B cell (primary cell): ENCODE measurements at regions of chr15 and their contacts with region 1.

Region 1: DNA sequence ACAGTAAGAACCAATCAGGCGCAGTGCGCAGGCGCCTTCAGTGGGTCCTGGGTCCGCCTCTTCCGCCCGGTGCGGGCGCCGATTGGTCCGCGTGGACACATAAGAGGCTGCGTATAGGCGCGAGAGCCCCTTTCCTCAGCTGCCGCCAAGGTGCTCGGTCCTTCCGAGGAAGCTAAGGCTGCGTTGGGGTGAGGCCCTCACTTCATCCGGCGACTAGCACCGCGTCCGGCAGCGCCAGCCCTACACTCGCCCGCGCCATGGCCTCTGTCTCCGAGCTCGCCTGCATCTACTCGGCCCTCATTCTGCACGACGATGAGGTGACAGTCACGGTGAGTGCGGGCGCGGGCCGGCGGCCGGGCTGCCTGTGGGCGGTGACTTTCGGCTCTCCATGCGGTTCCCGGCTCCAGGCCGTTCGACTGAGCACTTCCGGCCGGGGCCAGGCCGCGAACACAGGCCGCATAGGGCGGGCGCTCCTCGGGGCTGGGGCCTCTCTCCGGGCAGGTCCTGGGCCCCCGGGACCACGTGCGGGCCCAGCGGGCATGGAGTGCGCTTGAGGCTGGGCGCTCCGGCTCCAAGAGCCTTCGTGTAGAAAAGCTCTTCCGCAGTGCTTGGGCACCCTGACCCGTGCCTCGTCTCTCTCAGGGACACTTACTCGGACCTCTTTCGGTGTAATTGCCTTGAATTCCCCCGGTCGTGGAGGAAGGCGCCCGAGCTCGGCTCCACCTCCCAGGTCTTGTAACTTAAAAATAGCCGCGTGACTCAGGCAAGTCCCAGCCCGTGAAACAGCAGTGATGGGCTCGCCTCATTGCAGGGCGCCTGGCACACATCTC is at the start of gene RPLP1:
- DNase-seq: peak; percentile 97
- ATAC-seq: peak; percentile 91
- H3K4me3 ChIP-seq: peak within 1 kb of the TSS; percentile 77 to 97 (median 88)
- H3K4me3 Mint-ChIP-seq: peak within 1 kb of the TSS; percentile 100
- H3K27ac ChIP-seq: peak within 1 kb of the TSS; percentile 77 to 93
- H3K27ac Mint-ChIP-seq: peak within 1 kb of the TSS; percentile 100
- H3K4me1 ChIP-seq: peaks cover 26% of the 10 kb centered on the region in 2 donors
- H3K4me1 Mint-ChIP-seq: peaks cover 43% of the 10 kb centered on the region
- H3K27me3 ChIP-seq: no peaks in the 10 kb centered on the region
- H3K27me3 Mint-ChIP-seq: no peaks in the 10 kb centered on the region
- CTCF ChIP-seq: no peak
- total RNA-seq, gene RPLP1: 2,373 and 2,400 TPM in 2 replicates

Region 2: GRCh38 chr15:68078365-68078764 is 1374.5 kb before region 1 on chr15:
- CTCF ChIA-PET with region 1: no interaction called
- POLR2A ChIA-PET with region 1: interaction called, 10 read pairs
- intact Hi-C with region 1: no loop called
- DNase-seq: no peak
- ATAC-seq: no peak
- H3K4me3 ChIP-seq: no peak overlapping the region
- H3K4me3 Mint-ChIP-seq: no peak overlapping the region
- H3K27ac ChIP-seq: no peak overlapping the region
- H3K27ac Mint-ChIP-seq: no peak overlapping the region
- H3K4me1 ChIP-seq: peaks cover 12 to 41% of the 10 kb centered on the region in 2 donors
- H3K4me1 Mint-ChIP-seq: peaks cover 69% of the 10 kb centered on the region
- H3K27me3 ChIP-seq: no peaks in the 10 kb centered on the region
- H3K27me3 Mint-ChIP-seq: no peaks in the 10 kb centered on the region
- CTCF ChIP-seq: no peak

Region 3: GRCh38 chr15:69280783-69281182 is 172.1 kb before region 1 on chr15:
- CTCF ChIA-PET with region 1: no interaction called
- POLR2A ChIA-PET with region 1: no interaction called
- intact Hi-C with region 1: no loop called
- DNase-seq: no peak
- ATAC-seq: no peak
- H3K4me3 ChIP-seq: no peak overlapping the region
- H3K4me3 Mint-ChIP-seq: no peak overlapping the region
- H3K27ac ChIP-seq: no peak overlapping the region
- H3K27ac Mint-ChIP-seq: no peak overlapping the region
- H3K4me1 ChIP-seq: no peaks in the 10 kb centered on the region
- H3K4me1 Mint-ChIP-seq: no peaks in the 10 kb centered on the region
- H3K27me3 ChIP-seq: no peaks in the 10 kb centered on the region
- H3K27me3 Mint-ChIP-seq: peaks cover 17% of the 10 kb centered on the region
- CTCF ChIP-seq: no peak

Region 4: DNA sequence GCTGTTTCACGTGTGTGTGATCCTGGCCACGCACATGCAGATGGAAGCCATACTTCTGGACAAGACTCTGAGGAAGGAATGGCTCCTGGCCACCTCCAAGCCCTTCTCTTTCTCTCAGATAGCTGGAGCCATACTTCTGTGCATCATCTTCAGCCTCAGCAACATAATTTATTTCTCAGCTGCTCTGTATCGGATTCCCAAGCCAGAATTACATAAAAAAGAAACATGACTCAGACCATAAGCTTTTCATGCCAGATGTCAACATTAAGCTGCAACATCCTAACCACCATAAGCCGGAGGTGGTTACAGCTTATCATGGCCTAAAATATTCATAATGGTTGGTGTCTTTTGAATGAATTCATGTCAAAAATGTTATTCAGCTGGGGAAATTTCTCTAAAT is 49.3 kb before region 1 on chr15:
- CTCF ChIA-PET with region 1: no interaction called
- POLR2A ChIA-PET with region 1: no interaction called
- intact Hi-C with region 1: no loop called
- DNase-seq: no peak
- ATAC-seq: no peak
- H3K4me3 ChIP-seq: no peak overlapping the region
- H3K4me3 Mint-ChIP-seq: no peak overlapping the region
- H3K27ac ChIP-seq: no peak overlapping the region
- H3K27ac Mint-ChIP-seq: no peak overlapping the region
- H3K4me1 ChIP-seq: no peaks in the 10 kb centered on the region
- H3K4me1 Mint-ChIP-seq: no peaks in the 10 kb centered on the region
- H3K27me3 ChIP-seq: peaks cover 0 to 2% (median 0%) of the 10 kb centered on the region in 4 experiments
- H3K27me3 Mint-ChIP-seq: peaks cover 18% of the 10 kb centered on the region
- CTCF ChIP-seq: no peak

Region 5: DNA sequence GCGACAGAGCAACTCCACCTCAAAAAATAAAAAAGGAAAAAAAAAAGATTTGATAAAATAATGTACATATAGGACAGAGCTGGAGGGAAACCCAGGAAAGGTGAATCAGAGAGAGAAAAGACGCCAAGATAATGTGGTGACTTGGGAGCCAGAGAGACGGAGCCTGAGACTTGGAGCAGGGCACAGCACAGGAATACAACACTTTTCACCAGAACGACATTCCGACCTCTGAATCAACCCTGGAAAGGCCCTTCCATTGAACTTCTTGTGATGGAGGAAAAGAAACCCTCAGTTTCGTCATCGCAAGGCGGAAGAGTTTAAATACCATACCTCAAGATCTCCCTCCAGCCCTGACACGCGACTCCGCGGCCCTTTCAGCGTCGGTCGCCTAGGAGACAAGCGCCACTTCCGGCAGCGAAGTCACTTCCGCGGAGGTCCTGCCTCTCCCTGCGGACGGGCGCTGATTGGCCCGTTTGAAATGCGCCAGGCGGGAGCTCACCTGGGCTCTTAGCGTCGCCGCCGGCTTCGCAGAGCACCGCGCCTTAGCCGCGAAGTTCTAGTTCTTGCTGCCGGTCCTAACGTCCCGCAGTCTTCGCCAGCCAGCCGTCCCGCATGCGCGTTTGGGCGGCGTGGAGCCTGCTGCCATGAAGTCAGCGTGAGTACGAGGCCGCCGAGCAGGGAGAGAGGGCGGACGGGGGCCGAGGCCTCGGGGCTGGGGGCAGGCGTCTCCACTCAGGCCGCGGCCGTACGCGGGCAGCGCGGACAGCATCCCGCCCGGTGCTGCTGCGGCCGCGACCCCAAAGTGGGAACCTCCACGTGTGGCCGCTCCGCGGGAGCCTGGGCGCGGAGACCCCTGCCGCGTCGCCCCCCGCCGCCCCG is 38.8 kb before region 1 on chr15 and contains the start of gene KIF23:
- CTCF ChIA-PET with region 1: interaction called, 5 read pairs
- POLR2A ChIA-PET with region 1: interaction called, 12 read pairs
- intact Hi-C with region 1: loop called (anchors 1 kb)
- DNase-seq: peak; percentile 94
- ATAC-seq: peak; percentile 96
- H3K4me3 ChIP-seq: peak within 1 kb of the TSS; percentile 58 to 80 (median 70)
- H3K4me3 Mint-ChIP-seq: peak within 1 kb of the TSS; percentile 93
- H3K27ac ChIP-seq: no peak within 1 kb of the TSS
- H3K27ac Mint-ChIP-seq: peak within 1 kb of the TSS; percentile 62
- H3K4me1 ChIP-seq: peaks cover 5 to 9% of the 10 kb centered on the region in 2 donors
- H3K4me1 Mint-ChIP-seq: peaks cover 13% of the 10 kb centered on the region
- H3K27me3 ChIP-seq: peaks cover 0 to 8% (median 2%) of the 10 kb centered on the region in 4 experiments
- H3K27me3 Mint-ChIP-seq: peaks cover 16% of the 10 kb centered on the region
- CTCF ChIP-seq: no peak
- total RNA-seq, gene KIF23: 0.30 and 0.41 TPM in 2 replicates

Region 6: DNA sequence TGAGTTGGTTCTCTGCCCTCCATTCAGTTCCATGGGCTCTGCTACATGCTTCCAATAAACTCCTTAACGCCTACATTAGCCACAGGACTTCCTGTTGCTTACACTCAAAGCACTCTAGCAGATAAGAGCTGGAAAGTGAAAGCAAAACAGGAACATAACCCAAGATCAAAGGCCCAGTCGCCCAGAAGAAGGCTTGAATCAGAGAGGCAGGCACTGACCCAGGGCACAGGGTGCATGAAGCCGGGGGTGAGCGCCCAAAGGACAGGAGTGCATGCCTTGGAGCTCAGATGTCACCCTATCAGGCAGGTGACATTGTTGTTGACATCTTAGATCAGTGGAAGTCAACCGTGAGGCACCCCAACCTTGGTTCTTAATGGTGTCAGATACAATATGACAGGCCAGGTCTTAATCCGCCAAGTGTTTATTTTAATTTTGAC is 1075.4 kb after region 1 on chr15:
- CTCF ChIA-PET with region 1: no interaction called
- POLR2A ChIA-PET with region 1: interaction called, 3 read pairs
- intact Hi-C with region 1: loop called (anchors 5 kb)
- DNase-seq: peak; percentile 77
- ATAC-seq: peak; percentile 61
- H3K4me3 ChIP-seq: peak overlapping the region in 2 of 5 experiments; percentile 10 to 51
- H3K4me3 Mint-ChIP-seq: peak overlapping the region; percentile 70
- H3K27ac ChIP-seq: peak overlapping the region; percentile 54 to 78
- H3K27ac Mint-ChIP-seq: peak overlapping the region; percentile 88
- H3K4me1 ChIP-seq: peaks cover 36 to 42% of the 10 kb centered on the region in 2 donors
- H3K4me1 Mint-ChIP-seq: peaks cover 49% of the 10 kb centered on the region
- H3K27me3 ChIP-seq: peaks cover 0 to under 1% (median 0%) of the 10 kb centered on the region in 4 experiments
- H3K27me3 Mint-ChIP-seq: peaks cover 7% of the 10 kb centered on the region
- CTCF ChIP-seq: no peak

Region 7: GRCh38 chr15:70763120-70763878 is 1310.4 kb after region 1 on chr15 and contains the start of gene UACA:
- CTCF ChIA-PET with region 1: no interaction called
- POLR2A ChIA-PET with region 1: no interaction called
- intact Hi-C with region 1: loop called (anchors 2 kb)
- DNase-seq: peak; percentile 88
- ATAC-seq: peak; percentile 99
- H3K4me3 ChIP-seq: peak within 1 kb of the TSS in 4 of 5 experiments; percentile 58 to 79 (median 74)
- H3K4me3 Mint-ChIP-seq: peak within 1 kb of the TSS; percentile 93
- H3K27ac ChIP-seq: peak within 1 kb of the TSS in 1 of 2 donors; percentile 46
- H3K27ac Mint-ChIP-seq: peak within 1 kb of the TSS; percentile 37
- H3K4me1 ChIP-seq: peaks cover 24 to 26% of the 10 kb centered on the region in 2 donors
- H3K4me1 Mint-ChIP-seq: peaks cover 19% of the 10 kb centered on the region
- H3K27me3 ChIP-seq: peaks cover 2 to 23% (median 18%) of the 10 kb centered on the region in 4 experiments
- H3K27me3 Mint-ChIP-seq: peaks cover 34% of the 10 kb centered on the region
- CTCF ChIP-seq: no peak
- total RNA-seq, gene UACA: 1.8 and 2.7 TPM in 2 replicates